Tibial artery (tissue), 4 donors: ENCODE measurements at regions of chr1 and their contacts with region 1.

Region 1: DNA sequence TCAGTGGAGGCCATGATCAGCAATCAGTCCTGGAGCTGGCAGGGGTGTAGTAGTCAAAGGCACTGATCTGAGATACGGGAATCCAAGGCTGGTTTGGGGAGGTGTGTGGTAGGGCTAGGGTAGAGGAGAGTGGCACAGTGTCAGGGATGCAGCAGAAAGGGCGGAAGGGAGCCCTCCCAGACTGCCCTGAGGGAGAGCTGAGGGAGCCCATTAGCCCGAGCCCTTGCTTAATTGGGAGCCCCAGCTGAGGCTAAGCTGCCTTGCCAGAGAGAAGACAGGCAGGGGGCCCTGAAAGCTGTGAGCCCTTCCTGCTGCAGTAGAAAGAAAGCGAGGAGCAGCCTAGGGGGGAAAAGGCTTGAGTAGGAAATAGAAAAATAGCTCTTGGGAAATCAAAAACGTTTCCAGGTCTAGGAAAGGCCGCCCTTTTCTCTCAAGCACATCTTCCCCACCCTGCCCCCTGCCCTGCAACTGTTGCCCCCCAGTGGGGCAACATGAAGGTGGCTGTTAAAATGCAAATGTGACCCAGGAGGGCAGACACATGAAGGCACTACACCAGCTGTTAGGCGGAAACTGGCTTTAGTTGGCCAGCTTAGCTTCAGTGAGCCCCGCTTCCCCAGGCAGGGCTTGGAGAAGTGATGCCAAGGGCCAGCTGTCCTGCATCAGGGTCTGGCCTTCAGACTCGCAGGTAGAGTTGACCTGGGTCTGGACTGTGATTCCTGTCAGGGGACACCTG is 106.2 kb downstream of the UCK2 start:
- DNase-seq: no peak
- H3K4me3 ChIP-seq: no peak overlapping the region
- H3K27ac ChIP-seq: no peak overlapping the region
- H3K4me1 ChIP-seq: no peaks in the 10 kb centered on the region
- H3K27me3 ChIP-seq: peaks cover 0 to 3% of the 10 kb centered on the region in 2 donors
- CTCF ChIP-seq: no peak

Region 2: DNA sequence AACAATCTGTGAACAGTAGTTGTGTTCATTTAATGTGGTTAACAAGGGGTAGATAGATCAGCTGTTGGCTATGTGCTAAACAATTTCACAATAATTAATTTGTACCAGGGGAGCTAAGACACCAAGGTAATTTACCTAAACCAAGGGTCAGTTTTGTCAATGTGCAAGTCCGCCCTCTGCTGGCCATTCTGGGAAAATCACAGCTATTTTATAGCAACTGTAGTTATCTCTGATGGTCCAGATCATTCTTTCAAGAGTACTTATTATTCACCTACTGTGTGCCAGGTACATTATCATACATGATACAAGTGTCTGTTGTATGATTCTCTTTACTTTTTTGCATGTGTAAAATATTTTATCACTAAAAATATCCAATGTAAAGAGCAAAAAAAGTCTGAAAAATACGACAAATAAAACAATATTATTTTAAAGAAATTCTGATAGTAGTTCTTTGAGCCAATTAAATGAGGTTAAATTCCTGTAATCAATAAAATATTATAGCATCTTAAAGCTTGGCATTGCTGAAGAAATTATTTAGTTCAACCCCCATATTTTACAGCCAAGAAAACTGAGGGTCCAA is 545.5 kb after region 1 on chr1:
- intact Hi-C with region 1: loop called (anchors 10 kb)
- DNase-seq: peak in 1 of 2 donors; percentile 54
- H3K4me3 ChIP-seq: no peak overlapping the region
- H3K27ac ChIP-seq: no peak overlapping the region
- H3K4me1 ChIP-seq: no peaks in the 10 kb centered on the region
- H3K27me3 ChIP-seq: peaks cover 0 to 1% of the 10 kb centered on the region in 2 donors
- CTCF ChIP-seq: peak; percentile 60 to 75